Activated CD4-positive, alpha-beta T cell treated with anti-CD3 and anti-CD28 coated beads, Interleukin-2, amount 10 ng/mL, durations not matched to agents 7 days and 5 days (primary cell): ENCODE measurements at regions of chr1 and their contacts with region 1.

Region 1: GRCh38 chr1:223712194-223712849 is at the start of gene CAPN2:
- DNase-seq: peak; percentile 53
- H3K4me3 Mint-ChIP-seq: peak within 1 kb of the TSS; percentile 78
- H3K27ac Mint-ChIP-seq: peak within 1 kb of the TSS; percentile 87
- H3K4me1 Mint-ChIP-seq: peaks cover 67% of the 10 kb centered on the region
- H3K27me3 Mint-ChIP-seq: peaks cover 1% of the 10 kb centered on the region
- total RNA-seq, gene CAPN2: 206 to 207 TPM

Region 2: DNA sequence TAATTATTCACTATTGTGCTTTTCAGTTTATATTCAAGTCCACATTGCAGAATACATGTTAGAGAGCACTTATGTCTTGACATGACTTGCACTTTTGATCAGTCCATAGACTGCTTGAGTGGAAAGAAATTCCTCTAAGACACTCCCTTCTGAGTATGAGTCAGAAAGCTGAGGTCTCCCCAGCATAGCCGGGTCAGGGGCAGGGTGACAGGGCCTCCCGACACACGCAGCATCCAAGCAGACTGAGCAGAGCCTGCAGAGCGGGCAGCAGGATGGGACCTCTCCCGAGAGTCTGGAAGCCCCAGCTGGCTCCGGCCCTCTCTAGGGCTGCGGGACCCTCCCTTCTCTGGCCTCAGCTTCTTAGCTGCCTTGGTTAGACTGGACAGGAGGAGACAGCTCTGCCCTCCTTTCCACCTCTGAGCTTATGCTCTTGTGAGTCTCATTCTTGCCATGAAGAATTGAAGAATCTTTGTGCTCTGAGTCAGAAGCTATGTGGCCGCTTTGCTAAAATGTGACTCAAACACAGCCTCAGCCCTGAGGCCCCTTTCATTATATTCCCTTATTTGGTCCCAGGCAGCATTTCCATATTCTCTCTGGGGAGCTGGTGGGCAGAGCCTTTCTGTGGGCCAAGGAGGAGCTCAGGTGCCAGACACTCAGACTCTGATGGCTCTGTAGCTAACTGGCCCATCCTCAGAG is 11.2 kb before region 1 on chr1:
- CTCF ChIA-PET with region 1: interaction called, 14 read pairs
- POLR2A ChIA-PET with region 1: no interaction called
- DNase-seq: no peak
- H3K4me3 Mint-ChIP-seq: no peak overlapping the region
- H3K27ac Mint-ChIP-seq: no peak overlapping the region
- H3K4me1 Mint-ChIP-seq: peaks cover 22% of the 10 kb centered on the region
- H3K27me3 Mint-ChIP-seq: peaks cover 5% of the 10 kb centered on the region

Region 3: GRCh38 chr1:223733898-223734852 is 21.9 kb after region 1 on chr1:
- CTCF ChIA-PET with region 1: no interaction called
- POLR2A ChIA-PET with region 1: no interaction called
- DNase-seq: no peak
- H3K4me3 Mint-ChIP-seq: no peak overlapping the region
- H3K27ac Mint-ChIP-seq: peak overlapping the region; percentile 50
- H3K4me1 Mint-ChIP-seq: peaks cover 40% of the 10 kb centered on the region
- H3K27me3 Mint-ChIP-seq: no peaks in the 10 kb centered on the region